ENCODE measurements at regions of chr15 and their contacts with region 1.

Region 1: GRCh38 chr15:38440353-38441129 is 13.4 kb upstream of the FAM98B start:
- DNase-seq: no peak
- H3K4me3 ChIP-seq: no peak overlapping the region
- CTCF ChIP-seq: peak; percentile 83

Region 2: GRCh38 chr15:37995461-37996347 is 444.8 kb before region 1 on chr15:
- CTCF ChIA-PET with region 1: interaction called, 23 read pairs
- POLR2A ChIA-PET with region 1: no interaction called
- DNase-seq: no peak
- H3K4me3 ChIP-seq: no peak overlapping the region
- CTCF ChIP-seq: peak; percentile 36

Region 3: GRCh38 chr15:38424101-38424552 is 16.4 kb before region 1 on chr15:
- CTCF ChIA-PET with region 1: interaction called, 45 read pairs
- POLR2A ChIA-PET with region 1: no interaction called
- DNase-seq: no peak
- H3K4me3 ChIP-seq: no peak overlapping the region
- CTCF ChIP-seq: no peak

Region 4: GRCh38 chr15:38474155-38474757 is 33.7 kb after region 1 on chr15:
- CTCF ChIA-PET with region 1: interaction called, 12 read pairs
- POLR2A ChIA-PET with region 1: no interaction called
- DNase-seq: peak; percentile 67
- H3K4me3 ChIP-seq: no peak overlapping the region
- CTCF ChIP-seq: peak; percentile 77

Region 5: DNA sequence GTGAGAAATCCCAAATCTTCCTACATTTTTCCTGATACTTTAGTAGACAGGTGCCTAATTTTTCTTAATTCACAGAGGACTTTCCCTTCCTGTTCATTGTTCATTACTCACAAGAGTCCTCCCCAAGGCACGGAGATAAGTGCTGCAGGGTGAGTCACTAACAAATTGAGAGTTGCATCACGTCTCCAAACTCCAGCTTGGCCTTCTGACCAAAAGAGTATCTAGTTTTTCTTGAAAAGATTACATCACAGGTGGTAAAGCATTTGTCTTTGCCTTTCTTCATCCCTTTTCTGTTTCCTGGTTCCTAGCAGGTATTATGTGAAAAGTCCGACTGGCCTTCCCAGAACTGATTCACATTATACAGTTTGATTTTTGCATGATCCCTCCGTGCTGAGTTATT is 149.0 kb after region 1 on chr15:
- CTCF ChIA-PET with region 1: interaction called, 13 read pairs
- POLR2A ChIA-PET with region 1: no interaction called
- DNase-seq: peak; percentile 57
- H3K4me3 ChIP-seq: no peak overlapping the region
- CTCF ChIP-seq: no peak

Region 6: GRCh38 chr15:38671675-38672254 is 231.2 kb after region 1 on chr15:
- CTCF ChIA-PET with region 1: interaction called, 10 read pairs
- POLR2A ChIA-PET with region 1: no interaction called
- DNase-seq: no peak
- H3K4me3 ChIP-seq: no peak overlapping the region
- CTCF ChIP-seq: no peak

Region 7: DNA sequence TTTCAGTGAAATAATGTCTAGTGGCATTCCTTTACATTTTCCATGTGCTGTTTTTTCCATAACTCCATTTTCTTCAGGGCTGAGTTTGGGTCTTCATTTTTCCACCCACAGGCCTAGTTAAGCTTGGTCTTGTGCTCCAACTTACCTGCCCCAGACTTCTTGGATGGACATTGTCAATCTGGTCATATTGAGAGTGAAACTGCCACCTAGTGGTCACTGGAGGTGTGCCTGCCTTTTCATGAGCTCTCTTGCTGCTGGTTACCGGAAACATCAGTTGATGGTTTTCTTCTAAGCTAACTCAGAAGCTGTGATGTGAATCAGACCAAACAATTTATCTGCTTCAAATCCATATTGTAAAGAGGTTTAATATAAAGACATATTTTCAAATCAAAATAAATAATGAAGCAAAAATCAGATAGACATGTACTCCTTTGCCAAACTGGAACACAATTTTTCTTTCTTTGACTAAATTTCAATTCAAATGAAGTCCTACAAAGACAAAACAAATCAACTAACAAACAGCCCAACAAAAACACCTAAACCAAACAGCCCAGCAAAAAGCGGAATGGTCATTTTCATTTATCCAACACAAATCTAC is 259.2 kb after region 1 on chr15:
- CTCF ChIA-PET with region 1: interaction called, 144 read pairs
- POLR2A ChIA-PET with region 1: no interaction called
- DNase-seq: no peak
- H3K4me3 ChIP-seq: no peak overlapping the region
- CTCF ChIP-seq: peak; percentile 79

Measured in AG04449 (cell line).